Panc1 (cell line): ENCODE measurements at regions of chr2 and their contacts with region 1.

Region 1: DNA sequence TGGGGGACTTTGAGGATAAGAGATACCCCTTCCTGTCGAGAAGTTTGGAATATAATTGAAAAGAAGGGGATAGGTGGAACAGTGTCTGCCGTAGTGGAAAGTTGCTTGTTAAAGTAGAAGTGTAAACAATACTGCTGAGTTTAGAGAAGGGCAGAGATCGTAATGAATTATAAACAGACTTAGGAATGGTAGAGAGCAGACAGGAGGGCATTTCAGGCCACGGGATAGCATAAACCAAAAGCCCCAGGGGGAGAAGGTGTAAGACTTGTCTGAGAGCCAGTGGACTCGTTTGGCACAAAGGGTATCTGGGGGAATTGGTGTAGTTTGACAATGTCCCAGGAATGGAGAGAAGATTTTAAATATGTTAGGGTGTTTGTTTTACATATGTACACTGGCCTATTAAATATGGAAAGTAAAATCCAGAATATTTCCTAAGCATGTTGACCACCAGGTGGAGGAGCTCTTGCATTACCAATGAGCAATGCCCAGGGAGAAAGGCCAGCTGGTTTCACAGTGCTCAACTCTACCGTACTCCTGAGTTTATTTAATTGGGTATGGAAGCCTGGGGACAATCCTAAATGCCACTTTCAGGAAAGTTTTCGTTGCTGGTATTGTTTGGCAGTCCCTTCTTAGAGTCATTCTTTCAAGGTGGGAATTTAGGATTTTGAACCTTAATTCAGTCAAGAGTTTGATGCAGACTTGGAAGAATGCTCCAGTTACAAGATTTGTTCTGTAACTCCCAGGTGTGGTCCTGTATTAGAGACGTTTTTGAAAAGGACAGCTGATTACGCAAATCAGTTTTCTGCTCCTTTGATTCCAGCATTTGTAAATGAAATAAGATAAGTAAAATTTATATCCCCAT is 7.5 kb downstream of the COPS8 start:
- DNase-seq: peak; percentile 25
- ATAC-seq: peak; percentile 82
- H3K4me3 ChIP-seq: no peak overlapping the region
- H3K27ac ChIP-seq: peak overlapping the region; percentile 67
- H3K4me1 ChIP-seq: peaks cover 22% of the 10 kb centered on the region
- H3K27me3 ChIP-seq: no peaks in the 10 kb centered on the region
- CTCF ChIP-seq: peak; percentile 71

Region 2: DNA sequence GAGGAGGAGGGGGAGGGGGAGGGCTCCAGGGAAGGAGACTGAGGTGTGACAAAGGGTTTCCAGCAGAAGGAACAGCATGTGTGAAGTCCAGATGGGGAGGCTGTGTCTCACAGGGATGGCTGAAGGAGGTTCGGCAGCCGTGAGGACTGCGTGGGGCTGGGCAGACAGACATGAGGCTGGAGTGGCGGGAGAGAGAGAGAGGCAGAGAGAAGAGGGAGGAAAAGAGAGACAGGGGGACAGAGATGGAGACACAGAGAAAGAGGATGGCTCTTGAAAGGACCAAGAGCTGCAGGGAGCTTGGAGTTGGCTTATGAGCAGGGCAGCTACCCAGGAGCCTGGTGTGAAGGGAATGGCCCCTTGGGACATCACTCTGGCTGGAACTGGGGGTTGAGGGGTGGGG is 690.0 kb before region 1 on chr2:
- CTCF ChIA-PET with region 1: no interaction called
- POLR2A ChIA-PET with region 1: interaction called, 13 read pairs
- in situ Hi-C with region 1: no loop called
- intact Hi-C with region 1: no loop called
- DNase-seq: no peak
- ATAC-seq: no peak
- H3K4me3 ChIP-seq: no peak overlapping the region
- H3K27ac ChIP-seq: no peak overlapping the region
- H3K4me1 ChIP-seq: no peaks in the 10 kb centered on the region
- H3K27me3 ChIP-seq: no peaks in the 10 kb centered on the region
- CTCF ChIP-seq: no peak

Region 3: GRCh38 chr2:237012577-237013267 is 80.4 kb before region 1 on chr2:
- CTCF ChIA-PET with region 1: no interaction called
- POLR2A ChIA-PET with region 1: no interaction called
- in situ Hi-C with region 1: no loop called
- intact Hi-C with region 1: no loop called
- DNase-seq: no peak
- ATAC-seq: no peak
- H3K4me3 ChIP-seq: no peak overlapping the region
- H3K27ac ChIP-seq: no peak overlapping the region
- H3K4me1 ChIP-seq: no peaks in the 10 kb centered on the region
- H3K27me3 ChIP-seq: peaks cover 26% of the 10 kb centered on the region
- CTCF ChIP-seq: no peak

Region 4: DNA sequence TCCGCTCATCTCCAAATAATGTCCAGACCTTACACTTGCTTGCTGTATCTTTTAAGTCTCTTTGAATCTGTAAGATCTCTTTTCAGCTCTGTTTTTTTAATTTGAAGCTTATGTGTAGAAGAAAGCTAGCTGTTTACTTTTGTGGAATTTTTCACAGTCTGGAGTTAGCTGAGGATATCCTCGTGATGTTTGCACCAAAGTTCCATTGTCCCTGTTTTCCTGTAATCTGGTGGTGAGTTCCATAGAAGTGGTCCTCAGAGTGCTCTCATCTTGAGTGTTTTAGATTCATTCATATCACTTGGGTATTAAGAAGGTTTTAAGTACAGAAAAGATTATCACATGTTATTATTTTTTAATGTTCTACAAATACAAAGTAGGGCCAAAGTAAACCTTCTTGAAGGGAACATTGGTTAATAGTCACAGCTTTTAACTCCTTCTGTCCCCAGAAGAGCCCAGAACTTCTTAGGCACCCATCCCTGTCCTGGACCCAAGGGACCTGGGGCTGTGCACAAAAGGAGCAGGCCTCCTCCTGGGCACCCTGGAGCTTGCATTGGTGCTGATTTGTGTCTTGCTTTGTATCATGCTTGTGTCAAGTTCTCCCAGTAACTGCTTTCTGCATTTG is 408.9 kb after region 1 on chr2:
- CTCF ChIA-PET with region 1: no interaction called
- POLR2A ChIA-PET with region 1: interaction called, 10 read pairs
- in situ Hi-C with region 1: no loop called
- intact Hi-C with region 1: no loop called
- DNase-seq: no peak
- ATAC-seq: no peak
- H3K4me3 ChIP-seq: no peak overlapping the region
- H3K27ac ChIP-seq: peak overlapping the region; percentile 67
- H3K4me1 ChIP-seq: peaks cover 26% of the 10 kb centered on the region
- H3K27me3 ChIP-seq: no peaks in the 10 kb centered on the region
- CTCF ChIP-seq: no peak

Region 5: GRCh38 chr2:237572021-237572741 is 479.0 kb after region 1 on chr2:
- CTCF ChIA-PET with region 1: interaction called, 3 read pairs
- POLR2A ChIA-PET with region 1: no interaction called
- in situ Hi-C with region 1: no loop called
- intact Hi-C with region 1: loop called (anchors 2 kb)
- DNase-seq: peak; percentile 64
- ATAC-seq: peak; percentile 98
- H3K4me3 ChIP-seq: peak overlapping the region in 1 of 2 experiments; percentile 41; a peak in 2 of 4 replicates
- H3K27ac ChIP-seq: peak overlapping the region; percentile 77
- H3K4me1 ChIP-seq: peaks cover 9% of the 10 kb centered on the region
- H3K27me3 ChIP-seq: no peaks in the 10 kb centered on the region
- CTCF ChIP-seq: peak; percentile 97

Region 6: GRCh38 chr2:237666606-237667005 is 573.5 kb after region 1 on chr2:
- CTCF ChIA-PET with region 1: no interaction called
- POLR2A ChIA-PET with region 1: interaction called, 15 read pairs
- in situ Hi-C with region 1: no loop called
- intact Hi-C with region 1: no loop called
- DNase-seq: no peak
- ATAC-seq: no peak
- H3K4me3 ChIP-seq: no peak overlapping the region
- H3K27ac ChIP-seq: no peak overlapping the region
- H3K4me1 ChIP-seq: peaks cover 12% of the 10 kb centered on the region; the same call in 1 of the 2 replicates
- H3K27me3 ChIP-seq: no peaks in the 10 kb centered on the region
- CTCF ChIP-seq: no peak